ENCODE measurements at regions of chr17 and their contacts with region 1.

Region 1: GRCh38 chr17:28763804-28764266 is 20.0 kb downstream of the TRAF4 start:
- DNase-seq: peak; percentile 81
- ATAC-seq: no peak
- H3K4me3 Mint-ChIP-seq: no peak overlapping the region
- H3K27ac Mint-ChIP-seq: peak overlapping the region; percentile 96
- H3K4me1 Mint-ChIP-seq: peaks cover 57% of the 10 kb centered on the region
- H3K27me3 Mint-ChIP-seq: no peaks in the 10 kb centered on the region
- CTCF ChIP-seq: peak; percentile 92

Region 2: GRCh38 chr17:28540231-28540630 is 223.6 kb before region 1 on chr17:
- CTCF ChIA-PET with region 1: no interaction called
- POLR2A ChIA-PET with region 1: no interaction called
- DNase-seq: no peak
- ATAC-seq: no peak
- H3K4me3 Mint-ChIP-seq: no peak overlapping the region
- H3K27ac Mint-ChIP-seq: no peak overlapping the region
- H3K4me1 Mint-ChIP-seq: peaks cover 12% of the 10 kb centered on the region
- H3K27me3 Mint-ChIP-seq: no peaks in the 10 kb centered on the region
- CTCF ChIP-seq: no peak

Region 3: DNA sequence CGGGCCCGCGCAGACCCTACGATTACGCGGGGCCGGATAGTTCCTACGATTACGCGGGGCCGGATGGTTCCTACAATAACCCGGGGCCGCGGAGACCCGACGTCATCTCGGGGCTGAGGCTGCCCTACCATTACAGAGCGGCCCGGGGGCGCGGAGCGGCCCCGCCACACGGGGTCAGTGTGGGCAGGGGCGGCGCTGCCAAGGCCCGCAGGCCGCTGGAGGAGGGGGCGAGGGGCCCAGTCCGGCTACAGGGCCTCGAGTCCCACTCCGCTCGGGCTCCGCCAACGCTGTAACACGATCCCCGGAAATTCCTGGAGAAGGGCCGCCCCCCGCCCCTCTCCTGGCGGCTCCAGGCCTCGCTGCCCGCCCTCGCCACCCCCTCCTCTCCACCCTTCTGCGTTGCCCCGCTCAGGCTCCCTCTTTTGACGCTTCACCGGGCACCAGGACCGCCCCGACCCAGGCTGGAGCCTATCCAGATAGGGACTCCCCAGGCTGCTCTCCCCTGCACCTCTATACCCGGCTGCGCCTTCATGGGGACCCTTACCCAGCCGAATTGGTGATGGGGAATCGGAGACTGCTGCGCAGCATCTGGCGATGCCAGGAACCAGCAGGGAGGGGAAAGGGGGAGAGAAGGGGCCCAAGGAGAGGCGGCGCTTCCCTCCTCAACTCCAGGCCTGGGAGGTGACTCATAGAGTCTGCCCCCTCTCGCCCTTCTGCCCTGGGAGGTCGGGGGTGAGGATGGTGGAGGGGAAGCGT is 46.1 kb before region 1 on chr17 and contains the start of gene RAB34:
- CTCF ChIA-PET with region 1: interaction called, 10 read pairs
- POLR2A ChIA-PET with region 1: interaction called, 4 read pairs
- DNase-seq: peak; percentile 96
- ATAC-seq: peak; percentile 71
- H3K4me3 Mint-ChIP-seq: peak within 1 kb of the TSS; percentile 100
- H3K27ac Mint-ChIP-seq: peak within 1 kb of the TSS; percentile 97
- H3K4me1 Mint-ChIP-seq: peaks cover 47% of the 10 kb centered on the region
- H3K27me3 Mint-ChIP-seq: no peaks in the 10 kb centered on the region
- CTCF ChIP-seq: no peak
- total RNA-seq, gene RAB34: 153 to 181 TPM (median 162 TPM) in 3 replicates

Region 4: GRCh38 chr17:28777178-28777577 is 13.3 kb after region 1 on chr17:
- CTCF ChIA-PET with region 1: interaction called, 99 read pairs
- POLR2A ChIA-PET with region 1: interaction called, 3 read pairs
- DNase-seq: no peak
- ATAC-seq: no peak
- H3K4me3 Mint-ChIP-seq: no peak overlapping the region
- H3K27ac Mint-ChIP-seq: peak overlapping the region; percentile 73
- H3K4me1 Mint-ChIP-seq: peaks cover 34% of the 10 kb centered on the region
- H3K27me3 Mint-ChIP-seq: no peaks in the 10 kb centered on the region
- CTCF ChIP-seq: no peak

Region 5: DNA sequence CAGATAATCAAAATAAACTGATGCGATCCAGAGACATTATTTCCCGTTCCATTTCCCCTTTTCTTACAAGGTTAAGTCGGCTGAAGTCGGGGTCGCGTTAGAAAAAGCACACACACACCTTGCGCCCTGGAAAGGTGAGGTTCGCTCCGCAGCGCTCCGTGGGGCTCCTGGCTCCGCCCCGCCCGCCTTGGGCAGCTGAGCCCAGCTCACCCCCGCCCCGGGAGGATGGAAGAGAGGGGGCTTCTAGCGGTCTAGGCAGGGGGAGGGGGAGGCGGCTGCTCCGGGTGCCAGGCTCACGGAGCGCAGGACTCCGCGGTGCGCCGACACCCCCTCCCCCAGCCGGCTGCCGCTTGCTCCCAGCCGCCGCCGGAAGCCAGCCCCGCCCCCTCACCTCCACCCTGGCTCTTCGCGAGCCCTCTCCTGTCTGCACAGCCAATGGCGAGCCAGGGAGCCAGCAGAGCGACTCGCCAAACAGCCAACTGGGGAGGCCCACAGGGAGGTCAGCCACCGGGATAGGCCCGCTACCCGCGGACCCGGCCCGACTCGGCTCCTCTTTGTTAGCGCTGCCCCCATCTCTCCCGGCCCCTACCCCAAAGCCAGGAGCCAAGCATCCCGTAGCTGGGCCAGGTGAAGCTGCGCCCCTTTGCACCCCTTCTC is 48.4 kb after region 1 on chr17:
- CTCF ChIA-PET with region 1: interaction called, 32 read pairs
- POLR2A ChIA-PET with region 1: no interaction called
- DNase-seq: peak; percentile 99
- ATAC-seq: peak; percentile 97
- H3K4me3 Mint-ChIP-seq: peak overlapping the region; percentile 88
- H3K27ac Mint-ChIP-seq: peak overlapping the region; percentile 92
- H3K4me1 Mint-ChIP-seq: peaks cover 51% of the 10 kb centered on the region
- H3K27me3 Mint-ChIP-seq: no peaks in the 10 kb centered on the region
- CTCF ChIP-seq: no peak

Region 6: DNA sequence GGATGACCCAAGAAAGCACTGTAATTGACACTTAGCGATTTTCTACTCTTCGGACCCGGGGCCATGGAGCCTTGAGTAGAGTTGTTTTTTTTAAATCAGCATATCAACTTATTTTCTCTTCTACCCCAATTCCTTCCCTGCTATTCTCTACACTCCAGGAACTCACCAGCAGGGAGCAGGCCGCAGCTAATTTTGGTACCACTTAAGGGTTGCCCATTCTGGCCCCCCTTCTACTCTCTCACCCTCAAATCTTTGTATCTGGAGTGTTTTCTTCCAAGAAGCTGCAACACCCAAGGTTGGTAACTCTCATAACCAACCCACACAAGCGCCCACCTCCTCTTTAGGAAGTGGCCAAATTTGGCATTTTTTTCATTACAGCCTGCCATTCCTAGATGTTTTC is 85.4 kb after region 1 on chr17:
- CTCF ChIA-PET with region 1: interaction called, 49 read pairs
- POLR2A ChIA-PET with region 1: no interaction called
- DNase-seq: no peak
- ATAC-seq: peak; percentile 60
- H3K4me3 Mint-ChIP-seq: no peak overlapping the region
- H3K27ac Mint-ChIP-seq: no peak overlapping the region; the same call in 1 of the 2 replicates
- H3K4me1 Mint-ChIP-seq: peaks cover 3% of the 10 kb centered on the region; the same call in 1 of the 2 replicates
- H3K27me3 Mint-ChIP-seq: no peaks in the 10 kb centered on the region
- CTCF ChIP-seq: no peak

Region 7: DNA sequence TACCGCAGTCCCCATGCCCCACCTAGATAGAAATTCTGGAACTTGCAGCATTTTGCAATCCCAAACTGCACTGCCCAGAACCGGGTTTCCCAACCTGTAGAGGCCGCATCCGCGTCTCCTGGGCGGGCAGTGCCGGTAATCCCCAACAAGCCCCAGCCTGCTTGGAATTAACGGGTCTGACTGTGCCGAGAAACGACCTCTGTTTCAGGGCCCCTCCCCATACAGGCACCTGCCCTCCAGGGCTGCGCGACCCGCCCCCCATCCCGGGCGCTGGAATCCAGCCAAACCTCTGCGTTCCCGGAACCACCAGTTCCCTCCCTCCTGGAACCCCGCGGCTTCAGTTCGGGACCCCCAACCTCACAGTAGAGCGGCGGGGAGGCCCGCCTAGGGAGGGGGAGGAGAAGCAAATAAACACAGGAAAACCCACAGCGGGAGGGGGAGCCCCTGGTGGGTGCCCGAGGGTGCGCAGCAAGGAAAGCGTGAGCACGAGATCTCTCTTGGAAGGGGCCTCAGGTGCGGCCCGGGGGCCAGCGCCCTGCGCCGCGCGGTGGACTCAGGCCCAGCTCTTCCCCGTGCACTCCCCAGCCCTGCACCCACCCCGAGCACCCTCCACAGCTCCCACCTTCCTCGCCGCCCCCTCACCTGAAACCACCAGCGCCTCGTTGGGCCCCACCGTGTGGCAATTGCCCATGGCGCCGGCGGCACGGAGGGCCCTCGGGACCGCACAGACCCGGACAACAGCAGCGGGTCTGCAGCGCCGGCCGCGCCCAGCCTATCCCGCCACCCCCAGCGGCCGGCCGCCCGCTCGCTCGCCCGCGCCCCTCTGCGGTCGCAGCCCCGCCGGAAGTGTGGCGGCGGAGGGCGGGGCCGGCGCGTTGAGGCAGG is 133.3 kb after region 1 on chr17 and contains the start of gene FLOT2:
- CTCF ChIA-PET with region 1: interaction called, 33 read pairs
- POLR2A ChIA-PET with region 1: no interaction called
- DNase-seq: peak; percentile 72
- ATAC-seq: peak; percentile 69
- H3K4me3 Mint-ChIP-seq: peak within 1 kb of the TSS; percentile 94
- H3K27ac Mint-ChIP-seq: peak within 1 kb of the TSS; percentile 93
- H3K4me1 Mint-ChIP-seq: peaks cover 33% of the 10 kb centered on the region
- H3K27me3 Mint-ChIP-seq: no peaks in the 10 kb centered on the region
- CTCF ChIP-seq: no peak
- total RNA-seq, gene FLOT2: 139 to 153 TPM (median 144 TPM) in 3 replicates